ENCODE measurements at regions of chr1 and their contacts with region 1.

Region 1: GRCh38 chr1:214328770-214329469 is 48.0 kb downstream of the SMYD2 start:
- DNase-seq: peak; percentile 78
- H3K4me3 ChIP-seq: no peak overlapping the region; a peak in 1 of 4 replicates
- H3K27ac ChIP-seq: no peak overlapping the region
- H3K4me1 ChIP-seq: peaks cover 0 to 7% of the 10 kb centered on the region in 2 experiments; a peak in 1 of 4 replicates
- H3K27me3 ChIP-seq: no peaks in the 10 kb centered on the region
- CTCF ChIP-seq: peak; percentile 92
- EP300 ChIP-seq: no peak
- RAD21 ChIP-seq: peak; percentile 97

Region 2: DNA sequence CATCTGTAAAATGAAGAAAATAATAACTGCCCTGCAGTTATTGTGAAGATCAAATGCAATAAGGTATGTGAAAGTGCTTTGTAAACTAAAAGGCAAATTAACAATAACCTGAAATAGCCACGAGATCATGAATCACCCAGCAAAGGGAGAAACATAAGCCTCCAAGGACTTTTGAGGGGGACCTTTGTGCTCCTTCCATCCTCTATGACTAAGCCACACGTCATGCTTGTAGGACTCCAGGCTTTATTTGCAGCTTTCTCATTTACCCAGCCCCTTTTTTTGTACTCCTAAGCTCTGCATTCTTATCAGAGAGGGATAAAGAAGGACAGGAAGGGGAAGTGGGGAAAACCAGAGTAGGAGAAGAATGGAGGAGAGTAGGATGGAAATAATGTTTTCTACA is 226.0 kb before region 1 on chr1:
- CTCF ChIA-PET with region 1: no interaction called
- POLR2A ChIA-PET with region 1: no interaction called
- DNase-seq: no peak
- H3K4me3 ChIP-seq: no peak overlapping the region
- H3K27ac ChIP-seq: no peak overlapping the region
- H3K4me1 ChIP-seq: peaks cover 0 to 2% of the 10 kb centered on the region in 2 experiments; a peak in 1 of 4 replicates
- H3K27me3 ChIP-seq: no peaks in the 10 kb centered on the region
- CTCF ChIP-seq: no peak
- EP300 ChIP-seq: no peak
- RAD21 ChIP-seq: no peak

Region 3: GRCh38 chr1:214198571-214198970 is 130.3 kb before region 1 on chr1:
- CTCF ChIA-PET with region 1: interaction called, 153 read pairs
- POLR2A ChIA-PET with region 1: no interaction called
- DNase-seq: no peak
- H3K4me3 ChIP-seq: no peak overlapping the region
- H3K27ac ChIP-seq: no peak overlapping the region
- H3K4me1 ChIP-seq: peaks cover 0 to 6% of the 10 kb centered on the region in 2 experiments; a peak in 1 of 4 replicates
- H3K27me3 ChIP-seq: no peaks in the 10 kb centered on the region; the same call in 1 of the 2 replicates
- CTCF ChIP-seq: no peak
- EP300 ChIP-seq: no peak
- RAD21 ChIP-seq: no peak

Region 4: GRCh38 chr1:214234635-214235025 is 94.3 kb before region 1 on chr1:
- CTCF ChIA-PET with region 1: interaction called, 12 read pairs
- POLR2A ChIA-PET with region 1: no interaction called
- DNase-seq: no peak
- H3K4me3 ChIP-seq: no peak overlapping the region
- H3K27ac ChIP-seq: no peak overlapping the region
- H3K4me1 ChIP-seq: no peaks in the 10 kb centered on the region
- H3K27me3 ChIP-seq: no peaks in the 10 kb centered on the region
- CTCF ChIP-seq: no peak
- EP300 ChIP-seq: no peak
- RAD21 ChIP-seq: no peak

Region 5: GRCh38 chr1:214303141-214303930 is 25.6 kb before region 1 on chr1:
- CTCF ChIA-PET with region 1: interaction called, 14 read pairs
- POLR2A ChIA-PET with region 1: no interaction called
- DNase-seq: no peak
- H3K4me3 ChIP-seq: no peak overlapping the region
- H3K27ac ChIP-seq: no peak overlapping the region
- H3K4me1 ChIP-seq: no peaks in the 10 kb centered on the region
- H3K27me3 ChIP-seq: no peaks in the 10 kb centered on the region
- CTCF ChIP-seq: no peak
- EP300 ChIP-seq: no peak
- RAD21 ChIP-seq: no peak

Region 6: DNA sequence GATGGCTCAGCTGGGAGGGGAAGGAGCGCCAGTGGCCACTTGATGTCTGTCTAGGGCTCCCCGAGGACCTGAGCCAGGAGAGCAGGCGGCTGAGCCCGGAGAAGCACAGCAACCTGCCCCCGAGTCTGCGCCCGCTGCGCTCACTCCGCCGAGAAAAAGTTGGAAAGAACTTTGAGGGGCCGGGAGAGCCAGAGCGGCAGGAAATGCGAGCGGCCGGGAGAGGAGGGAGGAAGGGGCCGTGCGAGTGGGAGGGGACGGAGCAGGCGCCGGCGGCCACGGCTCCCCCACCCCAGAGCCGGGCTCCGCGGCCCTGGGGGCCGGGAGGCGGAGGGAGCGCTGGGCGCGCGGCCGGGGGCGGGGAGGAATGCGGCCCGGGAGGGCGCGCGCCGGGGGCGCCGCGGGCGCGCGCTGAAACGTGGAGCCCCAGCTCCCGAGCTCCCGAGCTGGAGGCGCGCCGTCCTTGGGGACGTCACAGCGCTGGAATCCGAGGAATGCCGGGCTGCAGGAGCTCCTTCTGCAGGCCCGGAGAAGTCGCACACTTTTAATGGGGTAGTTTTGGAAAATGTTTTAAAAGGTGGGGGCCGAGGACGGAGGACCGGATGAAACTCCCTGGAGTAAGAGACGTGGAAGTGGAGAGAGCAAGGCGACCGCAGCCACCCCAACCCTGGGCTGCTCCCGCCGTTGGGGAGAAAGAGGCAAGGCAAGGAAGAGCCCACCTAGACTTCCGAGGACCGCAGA is 222.7 kb after region 1 on chr1 and contains the start of gene PTPN14:
- CTCF ChIA-PET with region 1: interaction called, 17 read pairs
- POLR2A ChIA-PET with region 1: no interaction called
- DNase-seq: peak; percentile 91
- H3K4me3 ChIP-seq: peak within 1 kb of the TSS; percentile 73 to 81
- H3K27ac ChIP-seq: peak within 1 kb of the TSS; percentile 95 to 98
- H3K4me1 ChIP-seq: peaks cover 20 to 25% of the 10 kb centered on the region in 2 experiments
- H3K27me3 ChIP-seq: no peaks in the 10 kb centered on the region
- CTCF ChIP-seq: peak; percentile 52
- EP300 ChIP-seq: no peak
- RAD21 ChIP-seq: peak; percentile 9; the same call in 1 of the 2 replicates
- polyA plus RNA-seq, gene PTPN14: 12.8 and 14.3 TPM in 2 replicates

Region 7: DNA sequence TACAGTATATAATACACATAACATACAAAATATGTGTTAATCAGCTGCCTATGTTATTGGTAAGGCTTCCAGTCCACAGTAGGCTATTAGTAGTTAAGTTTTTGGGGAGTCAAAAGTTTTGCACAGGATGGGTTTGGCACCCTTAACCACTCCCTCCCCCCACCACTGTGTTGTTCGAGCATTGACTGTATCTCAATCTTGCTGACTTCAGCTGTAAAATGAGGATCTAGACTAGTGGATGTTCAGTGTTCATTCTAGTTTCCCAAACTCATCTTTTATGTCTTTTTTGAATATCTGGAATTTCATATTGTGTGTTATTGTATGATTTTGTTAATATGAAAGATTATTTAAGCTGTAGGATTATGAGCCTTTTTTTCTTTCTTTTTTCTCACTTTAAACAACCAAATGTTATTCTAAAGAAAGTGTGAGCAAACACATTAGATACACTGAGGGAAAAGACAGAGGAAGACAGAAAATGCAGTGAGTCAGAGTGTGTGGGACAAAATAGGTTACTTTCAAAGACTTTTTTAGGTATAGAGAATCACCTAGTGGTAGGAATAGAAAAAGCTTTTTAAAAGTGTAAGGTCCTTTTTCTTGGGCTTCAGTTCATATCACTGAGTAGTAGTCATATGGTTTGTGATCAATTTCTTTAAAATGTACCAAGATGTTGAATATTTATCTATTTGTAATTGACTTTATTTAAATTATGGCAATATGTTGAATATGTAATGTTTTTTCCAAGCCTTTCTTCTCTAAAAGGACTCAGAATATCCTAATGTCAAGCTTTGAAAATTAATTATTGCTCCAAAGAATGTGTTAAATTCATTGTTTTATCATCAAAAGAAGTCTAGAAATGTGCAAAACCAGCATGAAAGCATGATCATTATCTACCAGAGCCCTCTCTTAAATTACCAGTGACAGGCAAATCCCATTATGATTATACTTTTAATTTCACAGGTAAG is 256.2 kb after region 1 on chr1:
- CTCF ChIA-PET with region 1: interaction called, 323 read pairs
- POLR2A ChIA-PET with region 1: interaction called, 5 read pairs
- DNase-seq: no peak
- H3K4me3 ChIP-seq: no peak overlapping the region
- H3K27ac ChIP-seq: peak overlapping the region in 1 of 2 experiments; percentile 50; a peak in 2 of 4 replicates
- H3K4me1 ChIP-seq: peaks cover 3 to 38% of the 10 kb centered on the region in 2 experiments
- H3K27me3 ChIP-seq: no peaks in the 10 kb centered on the region
- CTCF ChIP-seq: peak; percentile 92
- EP300 ChIP-seq: no peak
- RAD21 ChIP-seq: peak; percentile 87

Region 8: DNA sequence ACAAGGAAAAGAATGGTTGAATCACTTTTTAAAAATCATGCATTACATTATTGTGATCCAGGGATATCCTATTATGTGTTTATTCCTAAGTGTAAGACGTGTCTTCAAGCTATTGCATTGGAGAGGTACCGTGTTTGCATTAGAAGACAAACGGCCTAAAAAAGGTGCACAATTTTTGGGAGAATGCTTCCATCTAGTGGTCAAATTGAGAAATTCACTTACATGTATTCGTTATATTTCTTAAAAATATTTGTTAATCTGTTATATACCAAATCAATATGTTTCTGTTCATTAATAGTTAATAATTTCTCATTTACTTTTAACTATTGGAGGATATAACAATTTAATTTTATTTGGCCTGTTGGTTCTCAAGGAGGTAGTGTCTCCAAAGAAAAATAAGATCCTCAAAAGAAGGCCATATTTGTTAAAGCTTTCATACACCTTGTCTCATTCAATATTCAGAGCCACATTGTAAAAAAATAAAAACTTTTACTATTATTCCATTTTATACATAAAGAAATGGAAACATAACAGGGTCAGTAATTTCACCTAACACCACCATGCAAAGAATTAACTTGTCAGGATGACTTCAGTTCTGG is 1197.7 kb after region 1 on chr1:
- CTCF ChIA-PET with region 1: interaction called, 20 read pairs
- POLR2A ChIA-PET with region 1: no interaction called
- DNase-seq: peak; percentile 15
- H3K4me3 ChIP-seq: no peak overlapping the region
- H3K27ac ChIP-seq: no peak overlapping the region
- H3K4me1 ChIP-seq: no peaks in the 10 kb centered on the region; a peak in 1 of 4 replicates
- H3K27me3 ChIP-seq: no peaks in the 10 kb centered on the region
- CTCF ChIP-seq: peak; percentile 75
- EP300 ChIP-seq: no peak
- RAD21 ChIP-seq: peak; percentile 88

Measured in SK-N-SH (cell line).